ENCODE measurements at regions of chrX and their contacts with region 1.

Region 1: GRCh38 chrX:49291615-49292337 is 11.7 kb upstream of the GAGE10 start:
- H3K4me3 Mint-ChIP-seq: no peak overlapping the region
- H3K27ac Mint-ChIP-seq: peak overlapping the region; percentile 4
- H3K4me1 Mint-ChIP-seq: peaks cover 10% of the 10 kb centered on the region
- H3K27me3 Mint-ChIP-seq: peaks cover 7% of the 10 kb centered on the region

Region 2: GRCh38 chrX:49754233-49754857 is 462.6 kb after region 1 on chrX:
- intact Hi-C with region 1: loop called (anchors 1 kb)
- H3K4me3 Mint-ChIP-seq: no peak overlapping the region
- H3K27ac Mint-ChIP-seq: no peak overlapping the region
- H3K4me1 Mint-ChIP-seq: peaks cover 6% of the 10 kb centered on the region
- H3K27me3 Mint-ChIP-seq: peaks cover 11% of the 10 kb centered on the region

Region 3: GRCh38 chrX:50707405-50707804 is 1415.6 kb after region 1 on chrX:
- intact Hi-C with region 1: no loop called
- H3K4me3 Mint-ChIP-seq: no peak overlapping the region
- H3K27ac Mint-ChIP-seq: no peak overlapping the region
- H3K4me1 Mint-ChIP-seq: peaks cover 11% of the 10 kb centered on the region
- H3K27me3 Mint-ChIP-seq: no peaks in the 10 kb centered on the region

Measured in dendritic cell treated with granulocyte-macrophage colony-stimulating factor and Interleukin-4, amounts not matched to agents 40 ng/mL and 50 ng/mL, for 4 days (primary cell).